Calu3 (cell line): ENCODE measurements at regions of chr12 and their contacts with region 1.

Region 1: DNA sequence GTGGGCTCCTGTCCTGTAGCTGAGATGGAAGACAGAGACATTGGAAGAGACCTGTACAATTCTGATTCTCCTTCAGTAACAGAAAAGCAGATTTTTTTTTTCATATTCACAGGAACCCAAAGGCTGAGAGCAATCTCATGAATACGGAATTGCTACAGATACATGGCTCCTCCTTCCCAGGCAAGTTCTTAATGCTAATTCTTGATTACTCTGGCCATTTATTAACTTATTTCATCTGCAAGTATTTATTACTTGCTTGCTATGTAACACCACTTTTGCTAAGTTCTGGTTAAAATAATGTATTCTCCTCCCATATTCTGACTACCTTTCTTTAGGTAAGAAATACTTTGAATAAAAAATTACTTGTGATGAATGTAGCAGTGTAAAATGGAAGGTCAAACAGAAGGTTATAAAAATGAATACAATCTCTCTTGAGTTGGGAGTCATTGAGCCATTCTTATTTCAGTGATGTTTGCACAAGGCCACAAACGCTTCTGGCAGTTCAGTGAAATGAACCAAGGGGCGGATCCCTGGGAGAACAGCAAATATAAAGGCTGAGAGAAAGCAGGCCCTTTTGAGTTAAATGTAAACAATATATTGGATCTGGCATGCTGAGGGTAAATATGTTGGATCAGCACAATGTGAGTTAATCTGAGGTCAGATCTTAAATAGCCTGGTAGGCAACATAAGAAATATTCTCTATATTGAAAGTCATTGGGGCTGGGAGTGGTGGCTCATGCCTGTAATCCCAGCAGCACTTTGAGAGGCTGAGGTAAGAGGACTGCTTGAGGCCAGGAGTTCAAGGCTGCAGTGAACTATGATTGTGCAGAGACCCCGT is 37.6 kb downstream of the MUCL1 start:
- DNase-seq: peak; percentile 57
- H3K4me3 Mint-ChIP-seq: no peak overlapping the region
- H3K27ac Mint-ChIP-seq: no peak overlapping the region
- H3K4me1 Mint-ChIP-seq: peaks cover 10% of the 10 kb centered on the region
- H3K27me3 Mint-ChIP-seq: peaks cover 25% of the 10 kb centered on the region
- CTCF ChIP-seq: no peak

Region 2: DNA sequence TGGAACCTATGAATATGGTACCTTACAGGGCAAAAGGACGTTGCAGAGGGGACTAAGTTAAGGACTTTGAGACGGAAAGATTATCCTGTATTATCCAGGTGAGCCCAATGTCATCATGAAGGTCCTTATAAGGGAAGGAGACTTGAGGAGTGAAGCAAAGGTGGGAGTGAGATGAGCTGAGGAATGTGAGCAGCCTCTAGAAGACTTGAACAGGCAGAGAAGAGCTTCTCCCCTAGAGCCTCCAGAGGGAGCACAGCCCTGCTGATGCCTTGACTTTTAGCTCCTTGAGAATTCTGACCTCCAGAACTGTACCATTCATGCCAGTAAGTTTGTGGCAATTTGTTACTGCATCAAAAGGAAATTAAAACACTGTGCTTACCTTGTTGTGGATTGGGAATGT is 202.0 kb before region 1 on chr12:
- CTCF ChIA-PET with region 1: no interaction called
- intact Hi-C with region 1: no loop called
- DNase-seq: no peak
- H3K4me3 Mint-ChIP-seq: no peak overlapping the region
- H3K27ac Mint-ChIP-seq: no peak overlapping the region
- H3K4me1 Mint-ChIP-seq: no peaks in the 10 kb centered on the region
- H3K27me3 Mint-ChIP-seq: peaks cover 89% of the 10 kb centered on the region
- CTCF ChIP-seq: no peak

Region 3: DNA sequence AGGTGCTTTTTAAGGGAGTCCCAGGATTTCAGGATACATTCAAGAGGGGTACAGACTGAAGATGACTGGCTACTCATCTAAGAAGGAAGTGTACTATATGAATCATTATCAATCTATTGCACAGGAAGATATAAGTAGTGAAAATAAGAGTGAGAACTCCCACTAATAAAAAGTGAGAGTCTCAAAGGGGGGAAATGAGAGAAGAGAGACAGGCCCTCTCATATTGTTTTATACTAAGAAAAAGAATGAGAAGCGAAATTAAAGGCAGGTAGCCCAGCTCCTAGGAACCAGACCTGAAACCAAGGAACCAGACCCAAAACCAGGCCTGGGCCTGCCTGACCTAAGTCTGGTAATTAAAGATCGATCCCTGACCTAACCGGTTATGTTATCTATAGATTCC is 38.1 kb after region 1 on chr12:
- CTCF ChIA-PET with region 1: no interaction called
- intact Hi-C with region 1: loop called (anchors 1 kb)
- DNase-seq: no peak
- H3K4me3 Mint-ChIP-seq: no peak overlapping the region
- H3K27ac Mint-ChIP-seq: no peak overlapping the region
- H3K4me1 Mint-ChIP-seq: peaks cover 14% of the 10 kb centered on the region
- H3K27me3 Mint-ChIP-seq: no peaks in the 10 kb centered on the region
- CTCF ChIP-seq: no peak

Region 4: GRCh38 chr12:55142669-55143565 is 251.0 kb after region 1 on chr12:
- CTCF ChIA-PET with region 1: no interaction called
- intact Hi-C with region 1: no loop called
- DNase-seq: peak; percentile 69
- H3K4me3 Mint-ChIP-seq: no peak overlapping the region
- H3K27ac Mint-ChIP-seq: no peak overlapping the region
- H3K4me1 Mint-ChIP-seq: no peaks in the 10 kb centered on the region
- H3K27me3 Mint-ChIP-seq: no peaks in the 10 kb centered on the region
- CTCF ChIP-seq: peak; percentile 63